Endothelial cell of umbilical vein (primary cell): ENCODE measurements at regions of chr6 and their contacts with region 1.

Region 1: DNA sequence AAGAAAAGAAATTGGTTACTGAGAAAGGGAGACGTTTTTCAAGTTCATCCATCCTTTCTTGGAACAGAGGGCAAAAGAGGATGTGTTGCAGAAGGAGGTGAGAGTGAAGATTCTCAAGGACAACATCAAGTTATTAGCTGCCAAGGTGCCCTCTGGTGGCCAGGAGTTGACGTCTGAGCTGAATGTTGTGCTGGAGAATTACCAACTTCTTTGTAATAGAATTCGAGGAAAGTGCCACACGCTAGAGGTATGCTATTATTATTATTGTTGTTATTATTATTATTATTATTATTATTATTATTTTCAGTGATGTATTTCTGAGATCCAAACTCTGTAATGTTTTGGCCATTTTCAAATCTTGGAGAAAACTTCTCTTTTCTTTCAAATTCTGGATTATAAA is 197.0 kb downstream of the UTRN start:
- DNase-seq: peak; percentile 84
- H3K4me3 ChIP-seq: no peak overlapping the region
- H3K27ac ChIP-seq: no peak overlapping the region
- H3K4me1 ChIP-seq: no peaks in the 10 kb centered on the region
- H3K27me3 ChIP-seq: no peaks in the 10 kb centered on the region
- CTCF ChIP-seq: peak; percentile 70 to 71
- POLR2A ChIP-seq: no peak

Region 2: DNA sequence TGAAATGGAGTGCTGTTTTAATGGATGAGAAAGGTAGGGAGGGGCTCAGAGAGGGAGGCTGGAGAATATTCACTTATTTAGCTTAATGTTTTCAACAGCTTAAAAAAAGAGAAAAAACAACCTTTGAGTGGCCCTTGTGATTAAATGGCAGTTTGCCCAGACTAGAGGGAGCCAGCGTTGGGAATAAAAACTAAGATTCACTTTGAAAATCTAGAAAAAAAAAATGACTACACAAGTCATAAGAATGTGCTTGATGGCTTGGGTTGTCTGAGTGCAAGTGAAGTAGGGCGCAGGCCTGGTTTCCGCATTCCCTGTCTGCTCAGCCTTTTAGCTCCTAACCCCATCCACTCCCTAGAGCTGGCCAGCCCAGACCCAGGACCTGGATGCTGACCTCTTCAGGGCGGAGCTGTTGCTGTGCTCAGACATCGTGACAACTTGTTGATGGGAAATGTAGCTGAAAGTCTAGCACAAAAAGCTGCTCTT is 168.1 kb before region 1 on chr6:
- CTCF ChIA-PET with region 1: interaction called, 12 read pairs
- POLR2A ChIA-PET with region 1: no interaction called
- dilution Hi-C with region 1: no loop called
- intact Hi-C with region 1: no loop called
- DNase-seq: peak; percentile 90
- H3K4me3 ChIP-seq: no peak overlapping the region
- H3K27ac ChIP-seq: peak overlapping the region; percentile 6
- H3K4me1 ChIP-seq: peaks cover 49% of the 10 kb centered on the region
- H3K27me3 ChIP-seq: no peaks in the 10 kb centered on the region
- CTCF ChIP-seq: no peak
- POLR2A ChIP-seq: no peak

Region 3: DNA sequence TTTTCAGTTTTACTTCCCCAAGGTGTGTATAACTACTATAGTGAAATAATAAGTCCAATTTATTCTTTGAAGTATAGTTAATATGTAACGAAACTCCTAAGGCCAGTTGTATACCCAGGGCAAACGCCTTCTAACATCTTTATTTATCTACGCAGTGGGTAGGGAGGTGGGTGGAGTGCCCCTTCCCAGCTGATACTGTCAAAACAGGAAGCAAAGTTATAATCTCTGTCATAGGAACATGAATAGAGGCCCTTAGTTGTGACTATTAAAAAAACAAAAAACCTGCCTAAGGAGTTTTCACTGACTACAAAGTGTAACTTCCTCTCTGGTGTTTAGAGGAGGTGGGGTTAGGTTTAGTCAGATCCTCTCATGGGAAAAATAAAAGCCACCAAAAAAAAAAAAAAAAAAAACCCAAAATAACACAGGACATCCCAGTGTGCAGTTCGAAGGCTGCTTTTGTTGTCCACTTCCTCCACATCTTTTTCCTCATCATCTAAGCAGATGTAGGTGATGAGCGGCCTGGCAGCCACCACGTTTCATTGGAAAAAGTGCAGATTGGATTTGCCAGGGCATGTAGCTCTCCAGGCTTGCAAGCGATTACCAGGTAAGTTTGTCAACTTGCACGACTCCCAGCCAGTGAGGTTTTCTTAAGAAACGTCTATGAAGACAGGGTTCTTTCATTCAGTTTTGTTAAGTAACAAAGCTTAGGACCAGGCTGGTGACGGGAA is 138.3 kb before region 1 on chr6:
- CTCF ChIA-PET with region 1: interaction called, 14 read pairs
- POLR2A ChIA-PET with region 1: no interaction called
- dilution Hi-C with region 1: no loop called
- intact Hi-C with region 1: no loop called
- DNase-seq: peak; percentile 88
- H3K4me3 ChIP-seq: peak overlapping the region in 2 of 3 experiments; percentile 16 to 81
- H3K27ac ChIP-seq: peak overlapping the region; percentile 77
- H3K4me1 ChIP-seq: peaks cover 70% of the 10 kb centered on the region
- H3K27me3 ChIP-seq: no peaks in the 10 kb centered on the region
- CTCF ChIP-seq: no peak
- POLR2A ChIP-seq: peak; percentile 61

Region 4: DNA sequence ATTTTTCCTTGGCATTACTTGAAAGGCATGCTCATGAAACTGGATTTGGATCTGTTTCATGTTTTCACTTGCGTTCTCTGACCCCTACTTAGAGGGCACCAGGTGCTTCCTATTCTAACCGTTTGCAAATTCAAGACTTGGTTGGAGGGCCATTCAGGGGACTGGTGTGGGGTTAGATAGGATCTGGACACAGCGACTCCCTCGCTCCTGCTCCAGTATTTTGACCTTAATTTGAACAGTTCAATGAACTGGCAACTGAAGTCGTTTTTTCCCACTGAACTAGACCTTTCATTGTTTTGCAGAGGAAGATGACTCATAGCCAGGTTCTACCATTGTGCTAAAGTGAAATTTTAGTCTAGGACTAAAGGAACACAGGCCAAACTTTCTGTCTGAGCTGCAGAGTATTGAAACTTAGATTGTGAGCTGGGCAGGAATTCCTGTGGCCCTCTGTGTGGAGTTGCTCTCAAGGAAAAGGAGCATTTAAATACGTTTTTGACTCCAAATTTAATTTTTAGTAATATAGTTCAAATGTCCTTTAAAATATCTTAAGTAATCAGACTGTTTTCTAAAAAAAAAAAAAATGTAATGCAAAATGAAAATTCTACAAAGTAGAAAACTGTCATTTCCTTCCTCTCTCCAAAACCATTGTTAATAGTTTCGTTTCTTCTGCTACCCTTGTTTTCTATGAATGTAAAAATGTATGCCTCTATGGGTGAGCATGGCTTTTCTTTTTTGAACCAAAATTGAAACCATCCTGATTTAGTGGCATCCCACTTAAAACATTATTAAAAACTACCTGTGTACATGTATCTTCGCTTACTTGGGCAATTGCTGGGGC is 132.2 kb before region 1 on chr6:
- CTCF ChIA-PET with region 1: interaction called, 14 read pairs
- POLR2A ChIA-PET with region 1: no interaction called
- dilution Hi-C with region 1: no loop called
- intact Hi-C with region 1: loop called (anchors 2 kb)
- DNase-seq: peak; percentile 100
- H3K4me3 ChIP-seq: peak overlapping the region in 2 of 3 experiments; percentile 28 to 74
- H3K27ac ChIP-seq: peak overlapping the region; percentile 90
- H3K4me1 ChIP-seq: peaks cover 69% of the 10 kb centered on the region
- H3K27me3 ChIP-seq: no peaks in the 10 kb centered on the region
- CTCF ChIP-seq: no peak
- POLR2A ChIP-seq: peak; percentile 61

Region 5: DNA sequence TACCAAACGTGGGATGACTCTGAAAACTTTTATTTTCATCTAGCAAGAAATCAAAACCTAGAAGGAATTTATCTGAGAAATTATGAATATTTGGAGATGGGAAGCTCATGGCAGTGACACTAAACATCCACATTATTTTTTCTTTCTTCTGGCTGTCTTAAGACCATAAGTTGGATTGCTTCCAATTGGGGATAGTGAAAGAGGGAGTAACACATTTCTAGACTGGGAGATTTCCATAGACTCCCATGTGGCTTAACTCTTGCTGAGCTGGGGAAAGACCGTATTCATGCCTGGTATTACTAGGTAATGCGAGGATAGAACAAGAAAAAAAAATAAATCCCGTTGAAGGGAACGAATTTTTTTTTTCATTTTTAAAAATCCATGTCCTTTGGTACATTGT is 77.0 kb before region 1 on chr6:
- CTCF ChIA-PET with region 1: no interaction called
- POLR2A ChIA-PET with region 1: no interaction called
- dilution Hi-C with region 1: no loop called
- intact Hi-C with region 1: no loop called
- DNase-seq: peak; percentile 27
- H3K4me3 ChIP-seq: no peak overlapping the region
- H3K27ac ChIP-seq: no peak overlapping the region
- H3K4me1 ChIP-seq: peaks cover 14% of the 10 kb centered on the region
- H3K27me3 ChIP-seq: no peaks in the 10 kb centered on the region
- CTCF ChIP-seq: no peak
- POLR2A ChIP-seq: no peak

Region 6: GRCh38 chr6:144434308-144434990 is 47.7 kb before region 1 on chr6:
- CTCF ChIA-PET with region 1: interaction called, 13 read pairs
- POLR2A ChIA-PET with region 1: no interaction called
- dilution Hi-C with region 1: no loop called
- intact Hi-C with region 1: no loop called
- DNase-seq: peak; percentile 89
- H3K4me3 ChIP-seq: no peak overlapping the region
- H3K27ac ChIP-seq: peak overlapping the region; percentile 43
- H3K4me1 ChIP-seq: peaks cover 14% of the 10 kb centered on the region
- H3K27me3 ChIP-seq: no peaks in the 10 kb centered on the region
- CTCF ChIP-seq: no peak
- POLR2A ChIP-seq: no peak

Region 7: DNA sequence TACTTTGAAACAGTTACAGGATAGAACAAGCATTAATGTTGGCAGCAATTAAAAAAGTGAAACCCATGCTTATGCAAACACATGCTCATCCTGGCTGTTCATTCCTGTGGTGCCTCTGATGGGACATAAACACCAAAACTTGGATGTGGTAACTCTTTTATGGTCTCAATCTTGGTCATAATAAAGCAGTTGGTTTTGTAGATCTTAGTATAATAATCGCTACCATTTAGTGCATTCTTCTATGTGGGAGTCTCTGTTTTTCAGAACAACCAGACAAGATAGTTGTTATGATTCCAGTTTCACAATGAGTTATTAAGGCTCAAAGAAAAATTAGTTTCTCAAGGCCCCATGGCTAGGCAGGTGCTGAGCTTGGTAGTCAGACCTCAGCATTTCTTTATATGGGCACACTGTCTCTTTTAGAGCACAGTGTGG is 13.0 kb before region 1 on chr6:
- CTCF ChIA-PET with region 1: interaction called, 13 read pairs
- POLR2A ChIA-PET with region 1: no interaction called
- dilution Hi-C with region 1: no loop called
- intact Hi-C with region 1: no loop called
- DNase-seq: no peak
- H3K4me3 ChIP-seq: no peak overlapping the region
- H3K27ac ChIP-seq: no peak overlapping the region
- H3K4me1 ChIP-seq: no peaks in the 10 kb centered on the region
- H3K27me3 ChIP-seq: no peaks in the 10 kb centered on the region
- CTCF ChIP-seq: no peak
- POLR2A ChIP-seq: no peak

Region 8: DNA sequence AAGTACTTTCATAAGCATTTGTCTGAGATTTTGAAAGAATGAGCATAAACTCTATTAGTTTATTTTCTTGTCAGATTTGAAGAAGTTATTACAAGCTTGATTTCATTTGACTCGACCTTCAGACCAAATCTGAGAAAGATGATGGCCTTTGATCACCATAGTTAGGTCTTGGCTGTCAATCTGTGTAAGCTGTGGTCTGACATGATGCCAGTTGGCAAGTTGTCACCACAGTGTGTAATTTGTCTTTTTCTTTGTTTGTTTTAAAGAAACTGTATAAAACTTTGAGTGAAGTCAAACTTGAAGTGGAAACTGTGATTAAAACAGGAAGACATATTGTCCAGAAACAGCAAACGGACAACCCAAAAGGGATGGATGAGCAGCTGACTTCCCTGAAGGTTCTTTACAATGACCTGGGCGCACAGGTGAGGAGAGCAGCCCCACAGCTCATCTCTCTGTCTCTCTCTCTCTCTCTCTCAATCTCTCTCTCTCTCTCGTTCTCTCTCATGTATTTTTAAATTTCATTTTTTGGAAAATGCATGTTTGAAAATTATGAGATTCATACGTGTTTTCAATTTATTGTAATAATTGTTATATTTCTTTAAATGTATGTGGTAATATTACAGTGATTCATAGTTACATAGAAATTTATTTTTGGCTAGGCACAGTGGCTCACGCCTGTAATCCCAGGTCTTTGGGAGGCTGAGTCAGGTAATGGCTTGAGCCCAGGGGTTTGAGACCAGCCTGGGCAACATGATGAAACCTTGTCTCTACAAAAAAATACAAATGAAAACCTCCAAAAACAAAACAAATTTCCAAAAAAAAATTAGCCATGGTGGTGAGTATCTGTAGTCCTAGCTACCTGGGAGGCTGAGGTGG is 11.1 kb after region 1 on chr6:
- CTCF ChIA-PET with region 1: interaction called, 17 read pairs
- POLR2A ChIA-PET with region 1: interaction called, 3 read pairs
- dilution Hi-C with region 1: no loop called
- intact Hi-C with region 1: no loop called
- DNase-seq: no peak
- H3K4me3 ChIP-seq: no peak overlapping the region
- H3K27ac ChIP-seq: no peak overlapping the region
- H3K4me1 ChIP-seq: no peaks in the 10 kb centered on the region
- H3K27me3 ChIP-seq: no peaks in the 10 kb centered on the region
- CTCF ChIP-seq: no peak
- POLR2A ChIP-seq: no peak

Region 9: GRCh38 chr6:144528743-144529425 is 46.7 kb after region 1 on chr6:
- CTCF ChIA-PET with region 1: no interaction called
- POLR2A ChIA-PET with region 1: no interaction called
- dilution Hi-C with region 1: no loop called
- intact Hi-C with region 1: no loop called
- DNase-seq: no peak
- H3K4me3 ChIP-seq: no peak overlapping the region
- H3K27ac ChIP-seq: no peak overlapping the region
- H3K4me1 ChIP-seq: no peaks in the 10 kb centered on the region
- H3K27me3 ChIP-seq: no peaks in the 10 kb centered on the region
- CTCF ChIP-seq: no peak
- POLR2A ChIP-seq: no peak

Region 10: DNA sequence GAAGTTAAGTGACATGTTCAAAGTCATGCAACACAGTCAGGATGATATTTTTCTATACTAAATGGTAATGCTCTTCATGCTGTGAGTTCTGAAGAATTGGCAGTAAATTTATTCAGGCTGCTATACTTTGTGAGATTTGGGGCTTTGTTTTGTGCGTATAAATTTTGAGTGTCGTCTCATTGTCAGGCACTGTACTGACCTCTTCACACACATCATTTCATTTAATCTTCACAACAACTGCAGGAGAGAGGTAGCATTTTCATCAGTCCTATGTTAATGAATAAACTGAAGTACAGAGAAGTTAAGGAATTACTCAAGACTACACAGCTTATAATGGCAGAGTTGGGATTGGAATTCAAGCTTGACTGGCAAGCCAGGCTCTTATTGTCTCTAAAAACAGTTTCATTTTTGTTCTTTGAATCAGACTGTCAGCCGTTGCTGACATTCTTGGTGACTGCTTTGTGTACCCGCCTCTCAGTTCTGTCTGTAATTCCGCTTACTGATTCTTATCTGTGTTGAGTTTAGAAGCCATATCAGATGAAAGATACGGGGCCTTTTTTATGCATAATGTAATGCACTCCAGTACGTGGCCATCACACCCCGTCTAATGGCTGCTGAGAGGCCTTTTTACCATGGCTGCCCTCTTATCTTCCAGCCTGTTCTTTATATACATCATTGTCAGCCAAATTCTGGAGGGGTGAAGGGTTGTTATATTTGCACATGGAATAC is 77.9 kb after region 1 on chr6:
- CTCF ChIA-PET with region 1: no interaction called
- POLR2A ChIA-PET with region 1: no interaction called
- dilution Hi-C with region 1: no loop called
- intact Hi-C with region 1: no loop called
- DNase-seq: peak; percentile 65
- H3K4me3 ChIP-seq: peak overlapping the region in 1 of 3 experiments; percentile 41
- H3K27ac ChIP-seq: peak overlapping the region; percentile 52
- H3K4me1 ChIP-seq: peaks cover 22% of the 10 kb centered on the region
- H3K27me3 ChIP-seq: no peaks in the 10 kb centered on the region
- CTCF ChIP-seq: no peak
- POLR2A ChIP-seq: no peak

Region 11: GRCh38 chr6:144661116-144661806 is 179.1 kb after region 1 on chr6:
- CTCF ChIA-PET with region 1: no interaction called
- POLR2A ChIA-PET with region 1: no interaction called
- dilution Hi-C with region 1: no loop called
- intact Hi-C with region 1: no loop called
- DNase-seq: no peak
- H3K4me3 ChIP-seq: no peak overlapping the region
- H3K27ac ChIP-seq: no peak overlapping the region
- H3K4me1 ChIP-seq: peaks cover 2% of the 10 kb centered on the region
- H3K27me3 ChIP-seq: no peaks in the 10 kb centered on the region
- CTCF ChIP-seq: no peak
- POLR2A ChIP-seq: no peak